ENCODE measurements at regions of chr10 and their contacts with region 1.

Region 1: DNA sequence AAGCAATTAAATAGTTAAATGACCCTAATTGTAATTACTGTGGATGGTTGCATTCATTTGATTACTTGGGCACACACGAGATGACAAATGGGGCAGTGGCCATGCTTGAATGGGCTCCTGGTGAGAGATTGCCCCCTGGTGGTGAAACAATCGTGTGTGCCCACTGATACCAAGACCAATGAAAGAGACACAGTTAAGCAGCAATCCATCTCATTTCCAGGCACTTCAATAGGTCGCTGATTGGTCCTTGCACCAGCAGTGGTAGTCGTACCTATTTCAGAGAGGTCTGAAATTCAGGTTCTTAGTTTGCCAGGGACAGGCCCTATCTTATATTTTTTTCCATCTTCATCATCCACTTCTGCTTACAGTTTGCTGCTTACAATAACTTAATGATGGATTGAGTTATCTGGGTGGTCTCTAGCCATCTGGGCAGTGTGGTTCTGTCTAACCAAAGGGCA is 8.3 kb downstream of the PCBD1 start:
- DNase-seq: peak; percentile 84
- ATAC-seq: peak; percentile 89
- H3K4me3 Mint-ChIP-seq: no peak overlapping the region
- H3K27ac Mint-ChIP-seq: no peak overlapping the region
- H3K4me1 Mint-ChIP-seq: peaks cover 2% of the 10 kb centered on the region
- H3K27me3 Mint-ChIP-seq: no peaks in the 10 kb centered on the region

Region 2: GRCh38 chr10:70549962-70550458 is 330.1 kb before region 1 on chr10:
- CTCF ChIA-PET with region 1: interaction called, 38 read pairs
- POLR2A ChIA-PET with region 1: no interaction called
- DNase-seq: peak; percentile 83
- ATAC-seq: peak; percentile 88
- H3K4me3 Mint-ChIP-seq: no peak overlapping the region
- H3K27ac Mint-ChIP-seq: peak overlapping the region; percentile 49
- H3K4me1 Mint-ChIP-seq: peaks cover 2% of the 10 kb centered on the region
- H3K27me3 Mint-ChIP-seq: no peaks in the 10 kb centered on the region

Region 3: DNA sequence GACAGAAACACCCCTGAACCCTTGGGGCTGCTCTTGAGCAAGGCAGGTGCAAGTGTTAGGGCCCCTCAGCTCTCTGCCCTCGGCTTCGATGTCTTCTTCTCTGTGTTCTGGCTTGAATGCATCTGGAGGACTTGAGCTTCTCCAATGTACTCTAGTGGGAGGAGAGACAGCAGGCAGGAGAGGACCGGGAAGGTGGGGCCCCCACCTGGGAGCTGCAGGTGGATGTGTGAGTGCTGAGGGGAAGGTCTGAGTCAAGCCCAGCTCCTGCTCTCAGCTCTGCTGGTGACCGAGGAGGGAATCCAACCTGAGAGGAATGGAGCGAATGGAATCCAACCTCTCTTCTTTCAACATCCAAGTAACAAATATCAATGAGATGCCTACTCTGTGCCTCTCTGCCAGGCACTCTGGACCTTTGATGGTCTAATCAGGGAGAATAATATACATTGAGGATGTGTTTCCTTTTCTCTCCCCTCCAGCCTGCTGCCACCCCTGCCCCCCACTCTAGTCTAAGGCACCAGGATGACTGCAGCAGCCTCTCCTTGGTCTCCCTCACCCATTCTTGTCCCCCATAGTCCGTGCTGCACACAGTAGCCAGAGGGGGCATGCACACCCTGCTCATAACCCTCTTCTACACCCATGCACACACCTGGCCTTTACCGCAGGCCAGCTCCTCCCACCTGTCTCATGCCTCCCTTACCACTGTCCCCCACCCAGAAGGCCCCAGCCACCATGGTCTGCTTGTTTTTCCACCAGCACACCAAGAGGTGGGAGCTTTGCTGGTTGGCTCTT is 108.6 kb before region 1 on chr10:
- CTCF ChIA-PET with region 1: no interaction called
- POLR2A ChIA-PET with region 1: no interaction called
- DNase-seq: no peak
- ATAC-seq: no peak
- H3K4me3 Mint-ChIP-seq: no peak overlapping the region
- H3K27ac Mint-ChIP-seq: no peak overlapping the region
- H3K4me1 Mint-ChIP-seq: no peaks in the 10 kb centered on the region
- H3K27me3 Mint-ChIP-seq: peaks cover 17% of the 10 kb centered on the region

Region 4: GRCh38 chr10:70815504-70816219 is 64.4 kb before region 1 on chr10 and contains the start of gene SGPL1:
- CTCF ChIA-PET with region 1: interaction called, 23 read pairs
- POLR2A ChIA-PET with region 1: no interaction called
- DNase-seq: peak; percentile 87
- ATAC-seq: peak; percentile 92
- H3K4me3 Mint-ChIP-seq: peak within 1 kb of the TSS; percentile 85
- H3K27ac Mint-ChIP-seq: peak within 1 kb of the TSS; percentile 80
- H3K4me1 Mint-ChIP-seq: peaks cover 15% of the 10 kb centered on the region
- H3K27me3 Mint-ChIP-seq: no peaks in the 10 kb centered on the region
- total RNA-seq, gene SGPL1: 22.2 to 28.0 TPM

Region 5: DNA sequence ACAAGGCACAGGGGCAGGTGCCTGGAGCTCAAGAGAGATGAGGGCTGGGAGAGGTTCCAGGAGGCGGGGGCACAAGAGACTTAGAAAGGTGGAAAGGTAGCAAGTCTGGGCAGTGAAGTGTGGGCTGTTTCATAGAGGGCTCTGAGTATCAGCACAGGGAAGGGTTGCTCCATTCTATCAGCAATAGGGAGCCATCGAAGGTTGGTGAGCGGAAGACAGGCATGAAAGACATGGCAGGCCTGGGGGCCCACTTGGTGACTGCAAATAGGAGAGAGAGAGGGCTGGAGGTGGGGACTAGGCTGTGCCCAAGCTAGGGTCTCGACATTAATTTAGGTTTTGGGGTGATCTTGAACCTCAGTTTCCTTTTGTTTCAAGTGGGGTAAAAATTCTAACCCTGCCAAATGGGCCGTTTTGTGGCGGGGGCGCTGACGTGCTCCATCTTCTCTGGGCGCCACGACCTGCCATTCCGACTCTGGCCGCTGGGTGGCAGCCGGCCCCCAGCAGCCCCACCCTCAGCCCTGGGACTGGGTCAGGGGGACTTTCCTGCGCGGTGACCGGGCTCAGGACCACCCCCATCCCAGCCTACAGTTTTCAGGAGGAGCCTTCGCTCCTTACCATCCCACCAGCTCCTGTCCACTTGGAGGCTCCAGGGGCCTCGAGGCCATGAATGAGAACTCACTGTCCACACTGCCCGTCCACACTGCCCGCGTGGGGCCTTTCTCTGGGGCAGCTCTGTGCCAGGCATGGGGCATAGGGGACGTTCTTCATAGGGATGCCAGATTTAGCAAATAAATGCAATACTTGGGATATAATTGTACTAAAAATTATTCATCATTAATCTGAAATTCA is 45.5 kb after region 1 on chr10:
- CTCF ChIA-PET with region 1: no interaction called
- POLR2A ChIA-PET with region 1: no interaction called
- DNase-seq: peak; percentile 67
- ATAC-seq: peak; percentile 77
- H3K4me3 Mint-ChIP-seq: no peak overlapping the region
- H3K27ac Mint-ChIP-seq: no peak overlapping the region
- H3K4me1 Mint-ChIP-seq: no peaks in the 10 kb centered on the region
- H3K27me3 Mint-ChIP-seq: peaks cover 7% of the 10 kb centered on the region

Measured in activated CD8-positive, alpha-beta T cell treated with anti-CD3 and anti-CD28 coated beads, Interleukin-2, amount 10 ng/mL, durations not matched to agents 7 days and 5 days (primary cell).